ENCODE measurements at regions of chr9 and their contacts with region 1.

Region 1: DNA sequence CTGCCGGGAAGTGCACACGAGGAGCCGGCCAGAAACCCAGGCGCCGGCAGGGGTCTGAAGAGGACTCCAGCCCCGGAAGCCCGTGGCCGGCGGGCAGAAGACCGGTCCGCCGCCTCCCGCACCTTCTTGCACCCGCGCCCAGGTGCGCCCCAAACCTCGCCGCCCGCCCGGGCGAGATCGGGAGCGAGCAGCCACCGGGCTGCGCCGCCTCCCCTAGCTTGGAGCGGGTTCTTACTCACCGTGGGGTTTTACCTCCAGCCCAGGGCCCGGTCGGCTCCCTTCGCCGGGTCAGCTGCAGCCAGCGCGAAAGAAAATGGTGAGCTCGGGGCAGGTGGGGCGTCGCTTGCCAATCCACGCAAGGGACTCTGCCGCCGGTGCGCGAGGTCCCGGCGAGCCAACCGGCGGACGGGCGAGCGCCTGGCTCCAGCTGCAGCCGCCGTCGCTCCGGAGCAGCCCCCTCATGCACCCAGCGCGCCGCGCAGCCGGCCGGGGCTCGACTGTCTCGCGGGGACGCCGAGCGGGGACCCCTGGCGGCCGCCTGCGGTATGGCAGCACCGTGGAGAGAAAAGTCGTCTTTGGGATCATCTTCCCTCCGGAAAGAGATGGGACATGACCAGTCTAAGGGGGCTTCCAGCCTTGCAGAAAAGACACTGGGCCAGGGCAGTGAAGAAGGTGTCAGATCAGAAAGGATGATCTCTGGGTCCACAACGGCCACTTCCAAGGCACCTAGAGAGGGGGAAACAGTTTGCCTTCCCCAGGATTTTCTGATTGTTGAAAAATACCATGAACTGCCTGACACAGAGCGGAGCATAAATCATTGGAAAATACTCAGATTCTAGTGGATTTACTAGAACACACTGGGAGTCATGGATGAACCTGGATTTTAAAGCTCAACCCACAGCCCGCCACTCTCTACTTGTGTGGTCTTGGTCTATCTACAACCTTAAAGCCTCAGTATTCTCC is at the start of gene MOB3B:
- DNase-seq: peak; percentile 46 to 72 (median 52)
- ATAC-seq: peak; percentile 84
- H3K4me3 ChIP-seq: peak within 1 kb of the TSS; percentile 60
- H3K27ac ChIP-seq: peak within 1 kb of the TSS; percentile 75
- H3K4me1 ChIP-seq: peaks cover 3 to 8% of the 10 kb centered on the region in 2 experiments; a peak in 4 of 5 replicates
- H3K27me3 ChIP-seq: no peaks in the 10 kb centered on the region
- CTCF ChIP-seq: peak; percentile 47 to 57 (median 55); a peak in 5 of 6 replicates
- EP300 ChIP-seq: no peak
- POLR2A ChIP-seq: no peak
- RAD21 ChIP-seq: peak; percentile 46 to 58
- polyA plus RNA-seq, gene MOB3B: 4.6 to 7.2 TPM

Region 2: GRCh38 chr9:27436234-27436633 is 93.4 kb before region 1 on chr9:
- CTCF ChIA-PET with region 1: no interaction called
- POLR2A ChIA-PET with region 1: interaction called, 3 read pairs
- in situ Hi-C with region 1: no loop called
- intact Hi-C with region 1: loop called (anchors 10 kb)
- DNase-seq: no peak
- ATAC-seq: no peak
- H3K4me3 ChIP-seq: no peak overlapping the region
- H3K27ac ChIP-seq: no peak overlapping the region
- H3K4me1 ChIP-seq: peaks cover 6 to 26% of the 10 kb centered on the region in 2 experiments; a peak in 4 of 5 replicates
- H3K27me3 ChIP-seq: no peaks in the 10 kb centered on the region
- CTCF ChIP-seq: no peak
- EP300 ChIP-seq: no peak
- POLR2A ChIP-seq: no peak
- RAD21 ChIP-seq: no peak

Region 3: GRCh38 chr9:27460226-27461023 is 69.2 kb before region 1 on chr9:
- CTCF ChIA-PET with region 1: no interaction called
- POLR2A ChIA-PET with region 1: no interaction called
- in situ Hi-C with region 1: loop called (anchors 10 kb)
- intact Hi-C with region 1: loop called (anchors 5 kb)
- DNase-seq: peak in 1 of 4 experiments; percentile 11
- ATAC-seq: peak; percentile 27; the same call in 2 of the 3 replicates
- H3K4me3 ChIP-seq: no peak overlapping the region
- H3K27ac ChIP-seq: peak overlapping the region; percentile 55
- H3K4me1 ChIP-seq: peaks cover 0 to 33% of the 10 kb centered on the region in 2 experiments; a peak in 3 of 5 replicates
- H3K27me3 ChIP-seq: no peaks in the 10 kb centered on the region
- CTCF ChIP-seq: no peak
- EP300 ChIP-seq: no peak; the same call in 1 of the 2 replicates
- POLR2A ChIP-seq: no peak
- RAD21 ChIP-seq: no peak